ENCODE measurements at regions of chr11 and their contacts with region 1.

Region 1: GRCh38 chr11:31240338-31240904 is 129.1 kb downstream of the DCDC1 start:
- DNase-seq: no peak
- ATAC-seq: no peak
- H3K4me3 ChIP-seq: no peak overlapping the region
- H3K27ac ChIP-seq: no peak overlapping the region
- H3K4me1 ChIP-seq: no peaks in the 10 kb centered on the region
- H3K27me3 ChIP-seq: no peaks in the 10 kb centered on the region
- CTCF ChIP-seq: peak; percentile 22 to 63 (median 46)
- POLR2A ChIP-seq: no peak

Region 2: DNA sequence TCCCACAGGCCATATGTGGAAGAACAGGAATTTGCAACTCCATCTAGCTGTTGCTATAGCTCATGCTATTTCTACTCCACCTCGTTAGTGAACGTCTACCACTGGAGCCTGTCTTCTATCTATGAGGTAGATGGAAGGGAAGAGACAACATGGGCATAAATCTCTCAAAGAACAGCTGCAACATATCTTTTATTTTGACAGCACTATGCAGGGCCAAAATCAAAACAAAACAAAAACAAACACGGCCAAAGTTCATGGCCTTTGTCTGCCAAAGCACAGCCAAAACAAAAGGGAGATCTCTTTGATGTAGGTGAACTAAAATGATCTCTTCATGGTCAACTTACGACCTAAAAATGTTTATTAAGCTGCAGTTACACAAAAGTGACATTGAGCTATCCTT is 439.1 kb before region 1 on chr11:
- intact Hi-C with region 1: no loop called
- DNase-seq: no peak
- ATAC-seq: no peak
- H3K4me3 ChIP-seq: no peak overlapping the region
- H3K27ac ChIP-seq: no peak overlapping the region
- H3K4me1 ChIP-seq: no peaks in the 10 kb centered on the region
- H3K27me3 ChIP-seq: no peaks in the 10 kb centered on the region
- CTCF ChIP-seq: no peak
- POLR2A ChIP-seq: no peak

Region 3: GRCh38 chr11:31022080-31022479 is 218.3 kb before region 1 on chr11:
- intact Hi-C with region 1: no loop called
- DNase-seq: no peak
- ATAC-seq: no peak
- H3K4me3 ChIP-seq: no peak overlapping the region
- H3K27ac ChIP-seq: no peak overlapping the region
- H3K4me1 ChIP-seq: no peaks in the 10 kb centered on the region
- H3K27me3 ChIP-seq: no peaks in the 10 kb centered on the region
- CTCF ChIP-seq: no peak
- POLR2A ChIP-seq: no peak

Region 4: GRCh38 chr11:31107062-31107461 is 133.4 kb before region 1 on chr11:
- intact Hi-C with region 1: loop called in 1 of 10 experiments (anchors 10 kb)
- DNase-seq: peak in 4 of 5 donors; percentile 34 to 60 (median 41)
- ATAC-seq: peak in 2 of 4 donors; percentile 52 to 57
- H3K4me3 ChIP-seq: no peak overlapping the region
- H3K27ac ChIP-seq: no peak overlapping the region
- H3K4me1 ChIP-seq: no peaks in the 10 kb centered on the region
- H3K27me3 ChIP-seq: peaks cover 0 to 14% (median 0%) of the 10 kb centered on the region in 9 donors
- CTCF ChIP-seq: peak; percentile 37 to 76 (median 54)
- POLR2A ChIP-seq: no peak

Region 5: GRCh38 chr11:31118566-31118965 is 121.9 kb before region 1 on chr11:
- intact Hi-C with region 1: no loop called
- DNase-seq: no peak
- ATAC-seq: no peak
- H3K4me3 ChIP-seq: no peak overlapping the region
- H3K27ac ChIP-seq: no peak overlapping the region
- H3K4me1 ChIP-seq: no peaks in the 10 kb centered on the region
- H3K27me3 ChIP-seq: no peaks in the 10 kb centered on the region
- CTCF ChIP-seq: no peak
- POLR2A ChIP-seq: no peak

Region 6: DNA sequence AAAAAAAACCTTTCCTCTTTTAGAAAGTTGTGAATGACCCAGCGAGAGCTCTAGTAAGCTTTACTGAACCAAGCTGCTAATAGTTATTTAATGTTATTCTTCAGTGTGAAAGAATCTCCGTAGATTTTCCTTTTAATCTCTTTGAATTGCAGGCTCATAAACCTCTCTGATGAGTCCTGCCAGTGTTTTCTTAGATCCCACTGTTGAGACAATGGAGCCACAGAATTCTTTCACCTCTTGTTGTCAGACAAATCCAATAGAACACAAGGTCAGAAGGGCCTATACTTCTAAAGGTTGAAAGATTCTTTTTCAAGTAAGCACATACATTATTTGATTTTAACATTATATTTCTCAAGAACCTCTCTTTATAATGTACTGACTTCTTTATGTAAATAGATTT is 181.4 kb after region 1 on chr11:
- intact Hi-C with region 1: no loop called
- DNase-seq: no peak
- ATAC-seq: no peak
- H3K4me3 ChIP-seq: no peak overlapping the region
- H3K27ac ChIP-seq: no peak overlapping the region
- H3K4me1 ChIP-seq: peaks cover 0 to 5% (median 0%) of the 10 kb centered on the region in 12 donors
- H3K27me3 ChIP-seq: no peaks in the 10 kb centered on the region
- CTCF ChIP-seq: no peak
- POLR2A ChIP-seq: no peak

Region 7: GRCh38 chr11:31870609-31871309 is 630.3 kb after region 1 on chr11:
- intact Hi-C with region 1: loop called in 6 of 10 experiments (anchors 5 to 10 kb)
- DNase-seq: peak in 4 of 5 donors; percentile 13 to 39 (median 34)
- ATAC-seq: peak in 3 of 4 donors; percentile 45 to 67 (median 50)
- H3K4me3 ChIP-seq: no peak overlapping the region
- H3K27ac ChIP-seq: no peak overlapping the region
- H3K4me1 ChIP-seq: peaks cover 0 to 5% (median 0%) of the 10 kb centered on the region in 12 donors
- H3K27me3 ChIP-seq: peaks cover 0 to 55% (median 6%) of the 10 kb centered on the region in 9 donors
- CTCF ChIP-seq: peak; percentile 39 to 71 (median 62)
- POLR2A ChIP-seq: no peak

Region 8: GRCh38 chr11:32006799-32007388 is 766.5 kb after region 1 on chr11:
- intact Hi-C with region 1: loop called in 1 of 10 experiments (anchors 10 kb)
- DNase-seq: no peak
- ATAC-seq: peak in 1 of 4 donors; percentile 63
- H3K4me3 ChIP-seq: peak overlapping the region in 1 of 12 donors; percentile 26
- H3K27ac ChIP-seq: no peak overlapping the region
- H3K4me1 ChIP-seq: no peaks in the 10 kb centered on the region
- H3K27me3 ChIP-seq: peaks cover 0 to 84% (median 23%) of the 10 kb centered on the region in 9 donors
- CTCF ChIP-seq: peak; percentile 37 to 72 (median 56)
- POLR2A ChIP-seq: no peak

Region 9: GRCh38 chr11:32184041-32184722 is 943.8 kb after region 1 on chr11:
- intact Hi-C with region 1: loop called in 7 of 10 experiments (anchors 5 to 10 kb)
- DNase-seq: peak in 1 of 5 donors; percentile 34
- ATAC-seq: peak in 1 of 4 donors; percentile 58
- H3K4me3 ChIP-seq: no peak overlapping the region
- H3K27ac ChIP-seq: peak overlapping the region in 1 of 12 donors; percentile 34
- H3K4me1 ChIP-seq: peaks cover 0 to 7% (median 0%) of the 10 kb centered on the region in 12 donors
- H3K27me3 ChIP-seq: no peaks in the 10 kb centered on the region
- CTCF ChIP-seq: no peak
- POLR2A ChIP-seq: no peak